Tibial artery (tissue), 4 donors: ENCODE measurements at regions of chr3 and their contacts with region 1.

Region 1: GRCh38 chr3:9976721-9977709 is 9.6 kb downstream of the EMC3 start:
- DNase-seq: peak; percentile 88 to 92
- H3K4me3 ChIP-seq: no peak overlapping the region
- H3K27ac ChIP-seq: peak overlapping the region; percentile 77 to 79
- H3K4me1 ChIP-seq: peaks cover 0 to 28% (median 14%) of the 10 kb centered on the region in 4 donors
- H3K27me3 ChIP-seq: no peaks in the 10 kb centered on the region
- CTCF ChIP-seq: no peak

Region 2: DNA sequence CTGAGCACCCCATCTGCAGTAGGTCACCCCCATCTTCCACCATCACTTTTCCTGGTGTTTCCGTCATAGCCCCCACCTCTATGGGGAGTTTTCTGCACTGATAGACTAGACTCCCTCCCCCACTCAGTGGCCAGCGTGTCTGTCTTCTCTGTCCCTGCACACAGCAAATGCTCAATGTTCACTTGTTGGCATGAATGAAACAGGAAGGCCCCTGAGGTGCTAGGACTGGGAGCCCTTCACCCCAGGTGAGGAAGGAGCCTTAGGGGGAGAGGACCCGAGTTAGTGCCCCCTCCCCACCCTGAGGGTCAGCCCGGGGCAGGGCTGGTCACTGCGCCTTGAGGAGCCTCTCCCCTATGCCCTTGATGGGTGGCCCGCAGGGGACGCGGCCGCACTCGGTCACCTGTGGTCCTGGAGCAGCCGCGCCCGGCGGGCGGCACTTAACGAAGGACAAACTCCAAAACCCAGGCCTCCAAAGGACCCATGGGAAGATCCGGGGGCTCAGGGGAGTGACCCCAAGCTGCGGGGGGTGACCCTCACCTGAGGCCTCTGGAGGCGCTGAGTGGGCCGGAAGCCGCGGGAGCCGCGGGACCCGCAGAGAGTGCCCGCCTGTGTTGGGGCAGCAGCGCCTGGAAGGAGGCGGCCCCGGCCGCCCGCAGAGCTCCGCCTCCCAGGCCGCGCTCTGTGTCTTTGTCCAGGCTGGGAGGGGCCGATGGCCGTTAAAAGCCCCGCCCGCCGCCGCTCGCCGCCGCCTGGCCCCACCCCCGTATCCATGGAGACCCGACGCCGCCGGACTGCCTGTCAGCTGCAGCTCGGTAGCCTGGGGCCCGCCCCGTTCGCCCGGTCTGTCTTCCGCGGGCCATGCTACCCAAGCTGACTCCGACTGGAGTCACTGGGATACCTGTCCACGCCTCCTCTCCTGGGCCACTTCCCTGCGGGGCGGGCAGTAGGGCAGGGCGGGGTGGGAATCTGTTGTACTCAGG is 33.8 kb after region 1 on chr3:
- intact Hi-C with region 1: no loop called
- DNase-seq: peak; percentile 95 to 98
- H3K4me3 ChIP-seq: peak overlapping the region; percentile 57 to 87
- H3K27ac ChIP-seq: peak overlapping the region; percentile 80
- H3K4me1 ChIP-seq: peaks cover 0 to 52% (median 41%) of the 10 kb centered on the region in 4 donors
- H3K27me3 ChIP-seq: no peaks in the 10 kb centered on the region
- CTCF ChIP-seq: no peak

Region 3: DNA sequence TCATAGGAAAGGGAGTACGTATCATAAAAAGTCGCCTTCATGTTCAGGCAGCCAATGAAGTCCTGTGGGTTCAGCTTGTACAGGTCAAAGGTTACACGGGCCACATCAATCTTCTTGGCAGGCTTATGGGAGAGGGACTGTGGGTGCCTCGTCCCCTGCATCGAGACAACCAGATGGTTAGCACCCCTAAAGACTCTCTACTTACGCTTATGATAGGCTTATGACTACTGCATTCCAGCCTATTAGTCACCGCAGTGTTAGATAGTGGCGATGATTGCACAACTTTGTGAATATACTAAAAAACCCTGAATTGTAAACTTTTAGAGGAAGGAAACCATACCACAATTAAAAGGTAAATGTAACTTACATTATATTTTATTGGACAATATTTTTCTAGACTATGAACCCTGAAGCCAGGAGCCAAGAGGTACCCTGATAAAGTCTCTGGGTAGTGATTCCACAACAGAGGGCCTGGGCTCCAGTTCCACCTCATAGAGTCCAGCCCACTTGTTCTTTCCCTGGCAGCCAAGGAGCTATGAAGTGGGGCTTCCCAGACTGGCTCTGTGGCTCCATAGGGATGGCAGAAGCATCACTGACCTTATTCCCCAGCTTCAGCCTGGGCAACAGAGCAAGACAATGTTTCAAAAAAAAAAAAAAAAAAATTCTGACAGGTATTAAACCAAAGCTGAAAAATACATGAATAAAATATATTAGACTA is 46.7 kb after region 1 on chr3:
- intact Hi-C with region 1: loop called (anchors 5 kb)
- DNase-seq: no peak
- H3K4me3 ChIP-seq: no peak overlapping the region
- H3K27ac ChIP-seq: no peak overlapping the region
- H3K4me1 ChIP-seq: peaks cover 4 to 35% (median 21%) of the 10 kb centered on the region in 4 donors
- H3K27me3 ChIP-seq: no peaks in the 10 kb centered on the region
- CTCF ChIP-seq: no peak